ENCODE measurements at regions of chr2 and their contacts with region 1.

Region 1: DNA sequence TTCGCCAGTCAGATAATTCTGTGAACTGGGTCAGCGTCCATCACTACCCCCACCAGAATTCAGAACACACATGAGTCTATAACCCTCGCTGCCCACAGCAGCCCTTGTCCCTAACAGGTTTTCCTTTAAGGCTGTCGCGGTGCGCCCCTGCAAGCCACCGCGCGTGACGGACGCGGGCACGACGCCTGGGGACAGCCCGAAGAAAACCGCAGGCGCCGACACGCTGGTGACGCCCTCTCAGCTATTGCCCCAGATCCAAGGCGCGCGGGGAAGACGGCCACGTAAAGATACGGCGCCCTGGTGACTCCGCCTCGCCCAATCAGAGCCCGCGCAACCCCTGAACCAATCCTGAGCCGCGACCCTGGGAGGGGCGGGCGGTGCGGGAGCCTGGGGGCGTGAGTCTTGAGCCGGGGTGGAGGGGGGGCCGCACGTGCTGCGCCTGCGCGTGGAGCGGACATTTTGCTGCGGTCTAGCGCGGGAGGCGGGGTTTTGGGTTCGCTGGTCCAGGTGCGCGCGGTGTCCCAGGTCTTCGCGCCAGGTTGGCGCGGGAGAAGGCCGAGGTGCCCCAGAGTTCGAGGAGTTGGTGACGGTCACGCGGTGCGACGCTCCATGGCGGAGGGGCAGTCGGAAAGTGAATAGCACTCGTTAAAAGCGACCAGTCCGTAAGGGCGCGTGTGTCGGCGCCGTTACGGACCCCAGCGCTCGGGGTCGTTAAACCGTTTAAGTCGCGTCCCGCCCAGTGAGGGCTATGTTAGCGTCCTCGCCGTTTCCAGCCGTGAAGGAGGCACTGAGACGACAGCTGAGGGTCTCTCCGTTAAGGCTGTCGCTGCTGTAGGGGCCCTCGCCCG is 15.9 kb downstream of the NMUR1 start:
- DNase-seq: peak; percentile 85 to 98
- H3K4me3 ChIP-seq: peak overlapping the region; percentile 91
- H3K27ac ChIP-seq: peak overlapping the region; percentile 70
- H3K4me1 ChIP-seq: peaks cover 15% of the 10 kb centered on the region
- H3K27me3 ChIP-seq: no peaks in the 10 kb centered on the region
- CTCF ChIP-seq: no peak

Region 2: GRCh38 chr2:231780909-231781797 is 266.8 kb after region 1 on chr2 and contains the start of gene PDE6D:
- CTCF ChIA-PET with region 1: no interaction called
- POLR2A ChIA-PET with region 1: no interaction called
- intact Hi-C with region 1: loop called (anchors 10 kb)
- DNase-seq: peak; percentile 93 to 98
- H3K4me3 ChIP-seq: peak within 1 kb of the TSS; percentile 78
- H3K27ac ChIP-seq: no peak within 1 kb of the TSS
- H3K4me1 ChIP-seq: peaks cover 20% of the 10 kb centered on the region
- H3K27me3 ChIP-seq: no peaks in the 10 kb centered on the region
- CTCF ChIP-seq: no peak
- total RNA-seq, gene PDE6D: 32.2 and 32.9 TPM in 2 replicates